Heart right ventricle (tissue), 16 donors: ENCODE measurements at regions of chr9 and their contacts with region 1.

Region 1: DNA sequence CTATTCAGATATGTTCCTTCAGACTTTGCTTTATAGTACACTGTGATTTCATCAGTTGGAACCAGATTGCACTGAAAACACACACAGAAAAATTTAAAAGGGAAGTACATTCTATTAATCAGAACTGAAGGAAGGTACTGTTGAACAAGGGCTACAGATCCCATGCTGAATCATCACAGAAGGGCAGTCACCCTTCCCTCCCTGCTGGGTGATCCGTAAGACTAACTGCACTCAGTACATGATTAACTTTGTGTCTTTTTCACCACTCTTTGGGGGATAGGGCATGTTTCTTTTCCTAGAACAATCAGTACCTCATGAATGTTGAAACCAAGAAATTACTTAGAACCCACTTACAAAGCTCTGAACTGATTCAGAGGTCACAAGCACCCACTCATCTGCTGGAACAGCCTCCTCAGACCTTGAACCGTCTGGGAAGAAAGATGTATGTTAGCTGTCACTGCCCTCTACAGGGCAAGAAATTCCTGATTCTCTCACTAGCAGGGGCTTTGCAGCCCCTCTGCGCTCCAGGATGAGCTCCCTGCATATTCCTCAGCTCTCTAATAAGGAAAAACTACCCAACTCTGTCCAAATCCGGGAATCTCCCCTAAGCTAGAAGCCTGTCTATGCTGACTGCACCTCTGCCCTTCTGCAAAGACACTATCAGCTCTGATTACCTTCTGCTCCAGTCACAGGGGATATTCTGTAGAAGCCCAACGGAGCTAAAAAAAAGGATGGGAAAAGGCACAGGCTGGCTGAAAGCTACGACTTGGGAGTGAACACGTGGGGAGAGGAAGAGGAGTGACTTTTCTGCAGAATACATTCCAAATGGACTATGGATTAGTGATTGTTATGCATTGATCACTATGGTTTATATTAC is 51.0 kb downstream of the IARS1 start:
- DNase-seq: no peak
- ATAC-seq: no peak
- H3K4me3 ChIP-seq: no peak overlapping the region
- H3K27ac ChIP-seq: no peak overlapping the region
- H3K4me1 ChIP-seq: no peaks in the 10 kb centered on the region
- H3K27me3 ChIP-seq: no peaks in the 10 kb centered on the region
- CTCF ChIP-seq: peak in 7 of 9 donors; percentile 9 to 43 (median 26)

Region 2: DNA sequence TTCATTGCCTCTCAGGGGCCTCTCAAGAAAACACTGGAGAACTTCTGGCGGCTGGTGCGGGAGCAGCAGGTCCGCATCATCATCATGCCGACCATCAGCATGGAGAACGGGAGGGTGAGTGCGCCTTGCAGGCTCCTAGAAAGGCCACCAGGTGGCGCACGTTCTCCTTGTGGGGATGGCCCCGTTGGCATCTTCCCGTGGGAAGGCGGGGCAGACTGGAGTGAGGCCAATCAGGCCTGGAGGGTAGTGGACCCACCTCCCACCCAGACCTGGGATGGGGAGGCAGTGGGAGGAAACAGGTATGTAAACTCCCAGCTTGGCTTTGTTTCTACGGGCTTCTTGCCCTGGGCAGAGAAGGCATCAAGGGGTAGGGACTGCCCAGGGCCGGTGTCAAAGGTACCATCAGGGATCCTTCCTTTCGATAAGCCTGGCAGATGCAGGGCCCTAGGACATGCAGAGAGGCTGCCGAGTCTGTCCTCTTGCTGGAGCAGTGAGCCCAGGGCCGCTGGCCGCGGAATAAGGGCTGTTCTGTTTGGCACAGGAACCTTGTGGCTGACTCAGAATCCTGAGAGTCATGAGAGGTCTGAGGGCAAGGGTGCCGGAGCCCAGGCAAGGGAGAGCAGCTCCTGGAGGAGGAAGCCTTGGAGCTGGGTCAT is 108.4 kb before region 1 on chr9:
- intact Hi-C with region 1: loop called in 3 of 10 experiments (anchors 2 to 10 kb)
- DNase-seq: peak; percentile 72 to 81
- ATAC-seq: peak; percentile 48 to 86 (median 76)
- H3K4me3 ChIP-seq: peak overlapping the region in 3 of 10 donors; percentile 14 to 34 (median 16)
- H3K27ac ChIP-seq: no peak overlapping the region
- H3K4me1 ChIP-seq: peaks cover 0 to 9% (median 7%) of the 10 kb centered on the region in 9 donors
- H3K27me3 ChIP-seq: peaks cover 0 to 22% (median 0%) of the 10 kb centered on the region in 7 donors
- CTCF ChIP-seq: peak; percentile 81 to 99 (median 95)

Region 3: DNA sequence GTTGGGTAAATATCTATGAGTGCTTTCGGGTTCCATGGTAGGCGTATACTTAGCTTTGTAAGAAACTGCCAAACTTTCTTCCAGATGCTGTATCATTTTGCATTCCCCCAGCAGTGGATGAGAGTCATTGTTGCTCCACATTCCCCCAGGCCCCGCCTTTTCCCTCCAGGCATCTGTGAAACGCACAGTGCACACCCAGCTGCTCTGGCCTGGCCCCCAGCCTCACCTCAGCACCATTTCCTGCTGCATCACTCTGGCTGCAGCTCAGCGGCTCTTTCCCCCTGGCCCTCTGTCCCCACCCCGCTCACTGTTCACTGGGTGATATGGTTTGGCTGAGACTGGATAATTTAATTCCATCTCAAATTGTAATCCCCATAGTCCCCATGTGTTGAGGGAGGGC is 50.7 kb before region 1 on chr9:
- intact Hi-C with region 1: no loop called
- DNase-seq: no peak
- ATAC-seq: no peak
- H3K4me3 ChIP-seq: no peak overlapping the region
- H3K27ac ChIP-seq: no peak overlapping the region
- H3K4me1 ChIP-seq: no peaks in the 10 kb centered on the region
- H3K27me3 ChIP-seq: peaks cover 0 to 23% (median 5%) of the 10 kb centered on the region in 7 donors
- CTCF ChIP-seq: no peak

Region 4: GRCh38 chr9:92276331-92277032 is 34.0 kb after region 1 on chr9:
- intact Hi-C with region 1: loop called in 1 of 10 experiments (anchors 5 kb)
- DNase-seq: no peak
- ATAC-seq: no peak
- H3K4me3 ChIP-seq: no peak overlapping the region
- H3K27ac ChIP-seq: no peak overlapping the region
- H3K4me1 ChIP-seq: peaks cover 0 to 7% (median 0%) of the 10 kb centered on the region in 9 donors
- H3K27me3 ChIP-seq: no peaks in the 10 kb centered on the region
- CTCF ChIP-seq: no peak